ENCODE measurements at regions of chr12 and their contacts with region 1.

Region 1: DNA sequence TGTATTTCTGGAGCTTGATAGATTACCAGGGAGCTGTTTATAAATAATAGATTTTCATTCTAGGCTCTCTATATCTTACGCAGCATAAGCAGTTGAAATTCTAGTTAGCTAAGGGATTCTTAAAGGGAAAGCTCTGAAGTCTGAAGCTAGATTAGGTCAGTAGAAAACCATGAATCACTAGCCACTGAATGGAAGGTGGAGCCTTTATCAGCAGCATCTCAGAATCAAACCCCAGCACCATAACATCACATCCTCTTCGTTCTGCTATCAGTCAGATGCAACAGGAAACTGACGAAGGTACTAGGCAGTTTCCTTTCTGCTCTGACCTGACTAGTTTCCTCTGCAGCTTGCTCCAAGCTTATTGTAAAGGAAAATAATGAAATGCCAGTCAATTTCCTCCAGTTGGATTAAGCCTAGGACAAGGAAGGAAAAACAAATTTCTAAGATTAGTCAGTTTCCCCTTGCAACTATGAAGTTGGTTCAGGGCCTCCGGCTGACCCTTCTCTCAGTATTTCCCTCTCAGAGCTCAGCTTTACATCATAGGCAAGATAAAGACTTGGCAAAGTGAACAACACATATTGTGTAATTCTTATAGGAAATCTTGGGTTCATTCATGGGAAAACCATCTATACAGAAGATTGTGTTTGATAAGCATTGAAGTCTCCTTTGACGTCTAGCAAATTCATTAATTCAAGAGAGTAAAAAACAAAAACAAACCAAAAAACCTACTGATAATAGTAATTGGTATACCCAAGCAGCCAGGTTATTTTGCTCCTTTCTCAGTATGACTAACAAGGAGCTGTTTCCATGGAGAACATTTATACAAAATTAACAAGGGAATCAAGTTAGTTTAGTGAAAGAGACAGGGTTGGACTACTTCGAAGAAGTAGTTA is 43.4 kb upstream of the CFAP54 start:
- DNase-seq: peak; percentile 24 to 95 (median 54)
- ATAC-seq: peak; percentile 92
- H3K4me3 ChIP-seq: peak overlapping the region in 1 of 2 experiments; percentile 20
- H3K4me3 Mint-ChIP-seq: peak overlapping the region; percentile 10
- H3K27ac ChIP-seq: peak overlapping the region; percentile 70 to 97
- H3K27ac Mint-ChIP-seq: peak overlapping the region; percentile 93
- H3K4me1 ChIP-seq: peaks cover 29% of the 10 kb centered on the region
- H3K4me1 Mint-ChIP-seq: peaks cover 40% of the 10 kb centered on the region
- H3K27me3 ChIP-seq: no peaks in the 10 kb centered on the region
- H3K27me3 Mint-ChIP-seq: no peaks in the 10 kb centered on the region
- CTCF ChIP-seq: no peak

Region 2: GRCh38 chr12:96194971-96195844 is 250.7 kb before region 1 on chr12:
- CTCF ChIA-PET with region 1: no interaction called
- POLR2A ChIA-PET with region 1: no interaction called
- intact Hi-C with region 1: loop called in 1 of 2 experiments (anchors 5 kb)
- DNase-seq: peak; percentile 37 to 93 (median 73)
- ATAC-seq: peak; percentile 70
- H3K4me3 ChIP-seq: peak overlapping the region; percentile 87 to 95
- H3K4me3 Mint-ChIP-seq: peak overlapping the region; percentile 94
- H3K27ac ChIP-seq: peak overlapping the region; percentile 74 to 77
- H3K27ac Mint-ChIP-seq: peak overlapping the region; percentile 97
- H3K4me1 ChIP-seq: peaks cover 43% of the 10 kb centered on the region
- H3K4me1 Mint-ChIP-seq: peaks cover 64% of the 10 kb centered on the region
- H3K27me3 ChIP-seq: no peaks in the 10 kb centered on the region
- H3K27me3 Mint-ChIP-seq: no peaks in the 10 kb centered on the region
- CTCF ChIP-seq: no peak

Region 3: DNA sequence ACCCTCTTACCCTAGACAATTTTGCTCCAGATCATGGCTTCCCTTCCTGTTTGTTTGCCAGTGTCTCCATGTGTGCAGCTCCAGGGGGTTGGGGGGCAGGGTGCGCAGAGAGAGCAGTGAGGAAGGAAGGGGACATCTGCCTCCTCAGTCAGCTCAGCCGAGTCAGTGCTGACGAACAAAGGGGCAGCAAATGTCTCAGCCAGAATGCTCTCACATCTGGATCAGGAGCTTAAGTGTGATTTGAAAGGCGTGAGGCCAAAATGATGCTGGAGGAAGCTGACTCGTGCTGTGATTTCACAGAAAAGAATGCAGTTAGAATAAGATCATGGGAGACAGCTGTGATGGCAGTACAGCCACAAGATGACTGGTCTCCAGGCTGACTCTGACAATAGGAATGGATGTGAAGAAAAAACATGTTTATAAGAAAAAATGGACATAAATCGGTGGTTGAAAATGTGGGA is 18.6 kb before region 1 on chr12:
- CTCF ChIA-PET with region 1: interaction called, 3 read pairs
- POLR2A ChIA-PET with region 1: interaction called, 7 read pairs
- intact Hi-C with region 1: loop called (anchors 2 kb)
- DNase-seq: no peak
- ATAC-seq: no peak
- H3K4me3 ChIP-seq: no peak overlapping the region
- H3K4me3 Mint-ChIP-seq: no peak overlapping the region
- H3K27ac ChIP-seq: no peak overlapping the region
- H3K27ac Mint-ChIP-seq: no peak overlapping the region
- H3K4me1 ChIP-seq: no peaks in the 10 kb centered on the region
- H3K4me1 Mint-ChIP-seq: peaks cover 17% of the 10 kb centered on the region
- H3K27me3 ChIP-seq: no peaks in the 10 kb centered on the region
- H3K27me3 Mint-ChIP-seq: no peaks in the 10 kb centered on the region
- CTCF ChIP-seq: no peak

Region 4: DNA sequence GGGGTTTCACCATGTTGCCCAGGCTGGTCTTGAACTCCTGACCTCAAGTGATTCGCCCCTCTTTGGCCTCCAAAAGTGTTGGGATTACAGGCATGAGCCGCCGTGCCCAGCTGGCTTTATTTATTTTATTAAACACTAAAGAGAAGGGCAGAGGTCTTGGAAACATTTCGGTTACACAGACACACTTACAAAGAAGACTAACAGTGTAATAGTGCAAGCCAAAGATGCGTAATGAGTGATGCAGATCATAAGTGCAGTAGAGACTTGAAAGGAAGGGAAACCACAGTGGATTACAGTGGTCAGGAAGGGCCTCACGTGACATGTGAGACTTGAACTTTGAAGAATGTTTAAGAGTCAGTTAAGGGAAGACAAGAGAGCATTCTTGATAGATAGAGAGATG is 11.8 kb before region 1 on chr12:
- CTCF ChIA-PET with region 1: interaction called, 12 read pairs
- POLR2A ChIA-PET with region 1: interaction called, 7 read pairs
- intact Hi-C with region 1: loop called (anchors 1 kb)
- DNase-seq: peak; percentile 37 to 96 (median 67)
- ATAC-seq: peak; percentile 97
- H3K4me3 ChIP-seq: peak overlapping the region in 1 of 2 experiments; percentile 24
- H3K4me3 Mint-ChIP-seq: peak overlapping the region; percentile 45
- H3K27ac ChIP-seq: peak overlapping the region; percentile 69 to 77
- H3K27ac Mint-ChIP-seq: peak overlapping the region; percentile 87
- H3K4me1 ChIP-seq: peaks cover 30% of the 10 kb centered on the region
- H3K4me1 Mint-ChIP-seq: peaks cover 36% of the 10 kb centered on the region
- H3K27me3 ChIP-seq: no peaks in the 10 kb centered on the region
- H3K27me3 Mint-ChIP-seq: no peaks in the 10 kb centered on the region
- CTCF ChIP-seq: no peak

Region 5: GRCh38 chr12:96471368-96472050 is 25.6 kb after region 1 on chr12:
- CTCF ChIA-PET with region 1: no interaction called
- POLR2A ChIA-PET with region 1: no interaction called
- intact Hi-C with region 1: no loop called
- DNase-seq: no peak
- ATAC-seq: no peak
- H3K4me3 ChIP-seq: no peak overlapping the region
- H3K4me3 Mint-ChIP-seq: no peak overlapping the region
- H3K27ac ChIP-seq: no peak overlapping the region
- H3K27ac Mint-ChIP-seq: no peak overlapping the region
- H3K4me1 ChIP-seq: no peaks in the 10 kb centered on the region
- H3K4me1 Mint-ChIP-seq: peaks cover 11% of the 10 kb centered on the region
- H3K27me3 ChIP-seq: no peaks in the 10 kb centered on the region
- H3K27me3 Mint-ChIP-seq: no peaks in the 10 kb centered on the region
- CTCF ChIP-seq: no peak